ENCODE measurements at regions of chr13 and their contacts with region 1.

Region 1: DNA sequence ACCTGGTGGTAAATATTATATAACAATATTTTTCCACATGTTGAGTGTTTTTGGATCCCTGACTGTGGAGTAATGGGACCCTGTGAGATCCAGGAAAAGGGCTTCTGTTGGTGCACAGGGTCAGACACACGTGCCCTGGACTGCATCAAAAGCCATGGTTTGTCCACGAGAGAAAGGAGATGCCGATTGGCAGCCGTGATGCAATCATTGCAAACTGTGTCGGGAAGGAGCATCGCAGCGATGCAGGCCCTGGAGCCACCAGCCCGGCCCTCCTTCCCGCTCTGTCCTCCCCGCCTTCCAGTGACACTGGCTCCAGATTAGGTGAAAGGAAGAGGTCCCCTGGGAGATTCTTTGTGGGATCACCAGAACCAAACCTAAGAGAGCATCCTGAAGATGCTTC is 9.1 kb downstream of the COL4A2 start:
- DNase-seq: no peak
- ATAC-seq: no peak
- H3K4me3 ChIP-seq: no peak overlapping the region
- H3K4me3 Mint-ChIP-seq: no peak overlapping the region
- H3K27ac ChIP-seq: no peak overlapping the region
- H3K27ac Mint-ChIP-seq: no peak overlapping the region
- H3K4me1 ChIP-seq: no peaks in the 10 kb centered on the region
- H3K4me1 Mint-ChIP-seq: peaks cover 17% of the 10 kb centered on the region
- H3K27me3 ChIP-seq: peaks cover 14 to 16% of the 10 kb centered on the region in 2 experiments
- H3K27me3 Mint-ChIP-seq: peaks cover 49% of the 10 kb centered on the region
- CTCF ChIP-seq: no peak

Region 2: DNA sequence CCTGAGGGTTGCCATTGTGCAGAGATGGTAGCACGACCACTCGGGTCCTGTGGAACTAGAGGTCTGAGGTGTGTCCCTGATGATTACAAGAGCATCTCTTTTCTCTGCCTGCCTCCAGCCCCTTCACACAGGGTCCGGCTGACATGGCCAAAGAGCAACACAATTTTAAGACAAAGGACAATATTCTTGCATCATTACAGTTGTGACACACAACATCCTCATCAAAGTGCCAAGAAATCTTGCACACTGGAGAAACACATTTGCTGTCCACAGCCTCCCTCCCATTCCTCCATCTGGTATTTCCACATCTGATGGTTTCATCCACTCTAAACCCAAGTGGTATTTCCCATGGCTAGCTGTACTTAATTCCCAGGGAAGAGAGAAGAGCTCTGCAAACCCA is 22.1 kb before region 1 on chr13:
- CTCF ChIA-PET with region 1: no interaction called
- POLR2A ChIA-PET with region 1: no interaction called
- intact Hi-C with region 1: loop called in 1 of 2 experiments (anchors 1 kb)
- DNase-seq: no peak
- ATAC-seq: no peak
- H3K4me3 ChIP-seq: no peak overlapping the region
- H3K4me3 Mint-ChIP-seq: no peak overlapping the region
- H3K27ac ChIP-seq: no peak overlapping the region
- H3K27ac Mint-ChIP-seq: no peak overlapping the region
- H3K4me1 ChIP-seq: no peaks in the 10 kb centered on the region
- H3K4me1 Mint-ChIP-seq: no peaks in the 10 kb centered on the region
- H3K27me3 ChIP-seq: peaks cover 21 to 25% of the 10 kb centered on the region in 2 experiments
- H3K27me3 Mint-ChIP-seq: peaks cover 54% of the 10 kb centered on the region
- CTCF ChIP-seq: no peak